Activated CD4-positive, alpha-beta T cell treated with anti-CD3 and anti-CD28 coated beads, Interleukin-2, amount 10 ng/mL, durations not matched to agents 24 days and 14 days (primary cell): ENCODE measurements at regions of chr12 and their contacts with region 1.

Region 1: DNA sequence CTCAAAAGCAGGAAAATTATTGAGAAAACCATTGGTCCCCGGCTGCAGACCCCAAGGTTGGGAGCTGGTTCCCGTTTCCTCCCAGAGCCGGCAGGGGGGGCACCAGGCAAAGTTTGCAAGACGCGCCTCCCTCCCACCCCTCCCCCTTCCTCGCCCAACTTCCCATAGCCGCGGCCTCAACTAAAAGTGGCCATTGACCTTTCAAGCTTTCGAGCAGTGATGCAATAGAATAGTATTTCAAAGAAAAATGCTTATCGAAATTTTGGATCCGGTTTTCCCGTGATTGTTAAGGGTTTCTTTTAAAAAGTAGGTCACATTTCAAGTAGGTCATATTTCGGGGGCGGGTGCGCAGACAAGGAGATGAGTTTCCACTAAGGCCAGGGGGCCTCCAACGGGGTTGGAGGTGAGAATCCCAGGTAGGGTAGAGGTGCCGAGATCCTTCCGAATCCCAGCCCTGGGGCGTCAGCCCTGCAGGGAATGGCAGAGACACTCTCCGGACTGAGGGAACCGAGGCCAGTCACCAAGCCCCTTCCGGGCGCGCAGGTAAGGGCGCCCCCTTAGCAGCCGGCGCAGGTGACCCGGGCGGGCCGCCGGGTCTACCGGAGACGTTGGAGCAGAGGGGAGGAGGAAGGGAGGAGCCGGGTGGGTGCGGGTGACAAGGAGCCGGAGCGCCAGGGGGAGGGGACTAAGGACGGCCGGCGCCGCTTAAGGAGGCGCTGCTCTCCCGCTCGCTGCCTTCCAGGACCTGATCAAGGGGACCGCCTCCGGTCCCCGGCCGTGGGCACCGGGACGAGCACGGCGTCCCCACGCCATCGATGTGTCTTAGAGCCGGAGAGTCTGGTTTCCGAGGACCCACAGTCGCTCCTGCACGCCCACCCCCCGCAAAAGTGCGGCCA is 2.6 kb upstream of the SOCS2 start:
- DNase-seq: peak; percentile 92
- H3K4me3 Mint-ChIP-seq: peak overlapping the region; percentile 80
- H3K27ac Mint-ChIP-seq: peak overlapping the region; percentile 86
- H3K4me1 Mint-ChIP-seq: peaks cover 30% of the 10 kb centered on the region
- H3K27me3 Mint-ChIP-seq: peaks cover 14% of the 10 kb centered on the region

Region 2: DNA sequence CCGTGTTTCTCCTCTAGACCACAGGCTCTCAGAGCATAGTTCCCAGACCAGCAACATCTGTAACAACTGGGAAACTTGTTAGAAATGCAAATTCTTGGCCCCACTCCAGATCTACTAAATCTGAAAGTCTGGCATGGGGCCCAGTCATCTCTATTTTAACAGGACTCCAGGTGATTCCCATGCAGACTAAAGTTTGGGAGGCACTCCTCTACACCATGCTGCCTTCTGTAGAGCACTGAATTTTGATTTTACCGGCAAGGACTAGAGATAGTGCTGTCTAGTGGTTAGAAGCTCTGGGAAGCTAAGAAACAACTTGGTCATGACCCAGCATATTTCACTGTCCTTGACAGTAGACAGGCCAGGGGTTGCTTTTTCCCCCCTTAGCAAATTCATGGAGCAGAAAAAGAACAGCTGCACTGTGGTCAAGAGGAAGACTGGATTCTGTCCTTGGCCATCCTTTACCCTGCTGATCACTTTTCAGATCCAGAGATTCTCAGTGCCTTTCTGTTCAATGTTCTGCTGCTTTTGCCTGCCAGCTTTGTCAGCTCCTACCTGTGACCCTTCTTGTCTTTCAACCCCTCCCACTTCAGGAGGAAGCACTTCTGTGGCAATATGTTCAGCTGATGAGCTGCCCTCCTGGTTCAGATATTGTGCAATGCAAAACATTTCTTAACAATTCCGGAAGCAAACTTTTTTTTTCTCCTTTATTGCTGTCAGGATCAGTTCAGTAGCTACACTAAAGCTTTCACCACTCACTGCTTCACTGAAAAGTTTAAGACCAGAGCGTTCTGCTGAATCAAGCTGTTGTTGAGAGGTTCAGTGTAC is 326.0 kb before region 1 on chr12:
- intact Hi-C with region 1: loop called (anchors 2 kb)
- DNase-seq: peak; percentile 74
- H3K4me3 Mint-ChIP-seq: peak overlapping the region; percentile 78
- H3K27ac Mint-ChIP-seq: peak overlapping the region; percentile 77
- H3K4me1 Mint-ChIP-seq: peaks cover 34% of the 10 kb centered on the region
- H3K27me3 Mint-ChIP-seq: no peaks in the 10 kb centered on the region

Region 3: GRCh38 chr12:93387780-93388179 is 182.1 kb before region 1 on chr12:
- intact Hi-C with region 1: no loop called
- DNase-seq: no peak
- H3K4me3 Mint-ChIP-seq: no peak overlapping the region
- H3K27ac Mint-ChIP-seq: peak overlapping the region; percentile 72
- H3K4me1 Mint-ChIP-seq: peaks cover 35% of the 10 kb centered on the region
- H3K27me3 Mint-ChIP-seq: no peaks in the 10 kb centered on the region

Region 4: GRCh38 chr12:93591137-93591868 is 21.4 kb after region 1 on chr12:
- intact Hi-C with region 1: loop called (anchors 1 kb)
- DNase-seq: peak; percentile 82
- H3K4me3 Mint-ChIP-seq: peak overlapping the region; percentile 92
- H3K27ac Mint-ChIP-seq: peak overlapping the region; percentile 38
- H3K4me1 Mint-ChIP-seq: peaks cover 30% of the 10 kb centered on the region
- H3K27me3 Mint-ChIP-seq: peaks cover 40% of the 10 kb centered on the region

Region 5: DNA sequence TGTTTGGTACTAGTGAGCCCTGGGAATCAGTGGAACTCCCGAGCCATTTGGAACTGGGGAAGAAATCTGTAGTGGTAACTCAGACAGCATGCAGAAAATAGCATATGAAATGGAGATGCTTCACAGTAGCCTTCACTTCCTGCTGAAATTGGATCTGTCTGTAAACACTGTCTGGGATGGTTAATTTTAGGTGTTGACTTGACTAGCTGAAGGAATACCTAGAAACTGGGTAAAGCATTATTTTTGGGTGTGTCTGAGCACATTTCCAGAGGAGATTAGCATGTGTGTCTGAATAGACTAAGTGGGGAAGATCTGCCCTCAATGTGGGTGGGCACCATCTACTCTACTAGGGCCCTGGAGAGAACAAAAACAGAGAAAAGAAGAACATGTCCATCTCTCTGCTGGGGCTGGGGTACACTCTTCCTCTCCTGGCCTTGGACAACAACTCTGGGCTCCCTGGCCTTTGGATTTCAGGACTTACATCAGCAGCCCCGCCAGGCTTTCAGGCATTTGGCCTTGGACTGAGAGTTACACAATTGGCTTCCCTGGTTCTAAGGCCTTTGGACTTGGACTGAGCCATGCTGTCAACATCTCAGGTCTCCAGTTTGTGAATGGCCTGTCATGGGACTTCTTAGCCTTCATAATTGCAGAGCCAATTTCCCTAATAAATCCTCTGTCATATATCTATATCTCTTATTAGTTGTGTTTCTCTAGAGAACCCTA is 93.3 kb after region 1 on chr12:
- intact Hi-C with region 1: no loop called
- DNase-seq: no peak
- H3K4me3 Mint-ChIP-seq: no peak overlapping the region
- H3K27ac Mint-ChIP-seq: no peak overlapping the region
- H3K4me1 Mint-ChIP-seq: no peaks in the 10 kb centered on the region
- H3K27me3 Mint-ChIP-seq: no peaks in the 10 kb centered on the region

Region 6: GRCh38 chr12:93766796-93767523 is 197.1 kb after region 1 on chr12:
- intact Hi-C with region 1: loop called (anchors 5 kb)
- DNase-seq: peak; percentile 85
- H3K4me3 Mint-ChIP-seq: peak overlapping the region; percentile 31
- H3K27ac Mint-ChIP-seq: no peak overlapping the region
- H3K4me1 Mint-ChIP-seq: peaks cover 40% of the 10 kb centered on the region
- H3K27me3 Mint-ChIP-seq: no peaks in the 10 kb centered on the region

Region 7: DNA sequence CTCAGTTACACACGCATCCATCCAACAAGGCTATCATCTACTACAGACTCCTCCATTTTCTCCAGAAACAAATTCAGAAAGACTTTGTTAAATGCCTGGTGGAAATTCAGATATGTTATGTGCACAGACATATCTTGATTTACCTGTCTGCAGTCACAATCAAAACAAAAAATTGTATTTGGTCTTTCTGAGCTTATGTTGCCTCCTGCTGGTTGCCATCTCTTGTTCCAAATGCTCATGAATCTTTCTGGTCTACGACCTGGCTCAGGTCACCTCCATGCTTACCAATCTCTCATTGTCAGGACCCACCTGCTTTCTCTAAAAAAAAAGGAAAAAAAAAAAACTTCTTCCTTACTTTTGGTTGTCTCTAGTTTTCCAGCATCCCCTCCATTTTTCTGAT is 409.3 kb after region 1 on chr12:
- intact Hi-C with region 1: loop called (anchors 5 kb)
- DNase-seq: peak; percentile 80
- H3K4me3 Mint-ChIP-seq: no peak overlapping the region
- H3K27ac Mint-ChIP-seq: no peak overlapping the region
- H3K4me1 Mint-ChIP-seq: peaks cover 34% of the 10 kb centered on the region
- H3K27me3 Mint-ChIP-seq: peaks cover 6% of the 10 kb centered on the region